Esophagus muscularis mucosa (tissue), 4 donors: ENCODE measurements at regions of chr2 and their contacts with region 1.

Region 1: GRCh38 chr2:25127646-25128045 is 40.7 kb downstream of the POMC start:
- DNase-seq: no peak
- H3K4me3 ChIP-seq: no peak overlapping the region
- H3K27ac ChIP-seq: no peak overlapping the region
- H3K4me1 ChIP-seq: peaks cover 6 to 26% (median 18%) of the 10 kb centered on the region in 4 donors
- H3K27me3 ChIP-seq: peaks cover 0 to 10% (median 0%) of the 10 kb centered on the region in 4 donors
- CTCF ChIP-seq: no peak
- EP300 ChIP-seq: no peak
- POLR2A ChIP-seq: no peak

Region 2: GRCh38 chr2:24840962-24841945 is 286.4 kb before region 1 on chr2:
- intact Hi-C with region 1: no loop called
- DNase-seq: no peak
- H3K4me3 ChIP-seq: no peak overlapping the region
- H3K27ac ChIP-seq: no peak overlapping the region
- H3K4me1 ChIP-seq: no peaks in the 10 kb centered on the region
- H3K27me3 ChIP-seq: no peaks in the 10 kb centered on the region
- CTCF ChIP-seq: no peak
- EP300 ChIP-seq: no peak
- POLR2A ChIP-seq: no peak

Region 3: GRCh38 chr2:24971536-24972314 is 155.9 kb before region 1 on chr2 and contains the start of gene DNAJC27:
- intact Hi-C with region 1: loop called (anchors 1 kb)
- DNase-seq: peak; percentile 99
- H3K4me3 ChIP-seq: peak within 1 kb of the TSS; percentile 65 to 87 (median 74)
- H3K27ac ChIP-seq: peak within 1 kb of the TSS; percentile 93 to 99 (median 96)
- H3K4me1 ChIP-seq: peaks cover 4 to 31% (median 29%) of the 10 kb centered on the region in 4 donors
- H3K27me3 ChIP-seq: no peaks in the 10 kb centered on the region
- CTCF ChIP-seq: no peak
- EP300 ChIP-seq: peak; percentile 22
- POLR2A ChIP-seq: peak; percentile 93
- total RNA-seq, gene DNAJC27: 5.8 to 8.6 (median 7.5) TPM

Region 4: GRCh38 chr2:25041928-25042320 is 85.7 kb before region 1 on chr2 and contains the start of gene EFR3B:
- intact Hi-C with region 1: loop called (anchors 5 kb)
- DNase-seq: peak; percentile 98
- H3K4me3 ChIP-seq: peak within 1 kb of the TSS; percentile 74 to 87 (median 80)
- H3K27ac ChIP-seq: peak within 1 kb of the TSS; percentile 83 to 91 (median 87)
- H3K4me1 ChIP-seq: peaks cover 20 to 29% (median 25%) of the 10 kb centered on the region in 4 donors
- H3K27me3 ChIP-seq: no peaks in the 10 kb centered on the region
- CTCF ChIP-seq: no peak
- EP300 ChIP-seq: no peak
- POLR2A ChIP-seq: no peak
- total RNA-seq, gene EFR3B: 0.65 to 2.9 (median 1.00) TPM